ENCODE measurements at regions of chr3 and their contacts with region 1.

Region 1: GRCh38 chr3:51670823-51671733 is at the start of gene TEX264:
- DNase-seq: peak; percentile 89
- ATAC-seq: peak; percentile 68
- H3K4me3 Mint-ChIP-seq: peak within 1 kb of the TSS; percentile 85
- H3K27ac Mint-ChIP-seq: peak within 1 kb of the TSS; percentile 86
- H3K4me1 Mint-ChIP-seq: peaks cover 59% of the 10 kb centered on the region
- H3K27me3 Mint-ChIP-seq: no peaks in the 10 kb centered on the region
- CTCF ChIP-seq: no peak
- total RNA-seq, gene TEX264: 24.9 to 26.0 TPM

Region 2: GRCh38 chr3:51429138-51429537 is 241.9 kb before region 1 on chr3:
- CTCF ChIA-PET with region 1: no interaction called
- POLR2A ChIA-PET with region 1: no interaction called
- intact Hi-C with region 1: no loop called
- DNase-seq: no peak
- ATAC-seq: no peak
- H3K4me3 Mint-ChIP-seq: no peak overlapping the region
- H3K27ac Mint-ChIP-seq: no peak overlapping the region
- H3K4me1 Mint-ChIP-seq: peaks cover 2% of the 10 kb centered on the region
- H3K27me3 Mint-ChIP-seq: no peaks in the 10 kb centered on the region
- CTCF ChIP-seq: no peak

Region 3: GRCh38 chr3:51538459-51539290 is 132.4 kb before region 1 on chr3 and contains the start of gene RAD54L2:
- CTCF ChIA-PET with region 1: interaction called, 17 read pairs
- POLR2A ChIA-PET with region 1: interaction called, 3 read pairs
- intact Hi-C with region 1: no loop called
- DNase-seq: peak; percentile 75
- ATAC-seq: peak; percentile 87
- H3K4me3 Mint-ChIP-seq: peak within 1 kb of the TSS; percentile 83
- H3K27ac Mint-ChIP-seq: peak within 1 kb of the TSS; percentile 89
- H3K4me1 Mint-ChIP-seq: peaks cover 22% of the 10 kb centered on the region
- H3K27me3 Mint-ChIP-seq: no peaks in the 10 kb centered on the region
- CTCF ChIP-seq: peak; percentile 30
- total RNA-seq, gene RAD54L2: 24.1 to 24.6 TPM

Region 4: GRCh38 chr3:51605938-51606337 is 65.1 kb before region 1 on chr3:
- CTCF ChIA-PET with region 1: no interaction called
- POLR2A ChIA-PET with region 1: no interaction called
- intact Hi-C with region 1: no loop called
- DNase-seq: peak; percentile 35
- ATAC-seq: peak; percentile 55
- H3K4me3 Mint-ChIP-seq: no peak overlapping the region
- H3K27ac Mint-ChIP-seq: peak overlapping the region; percentile 35
- H3K4me1 Mint-ChIP-seq: peaks cover 14% of the 10 kb centered on the region
- H3K27me3 Mint-ChIP-seq: no peaks in the 10 kb centered on the region
- CTCF ChIP-seq: no peak

Region 5: GRCh38 chr3:51637941-51638471 is 33.1 kb before region 1 on chr3:
- CTCF ChIA-PET with region 1: interaction called, 46 read pairs
- POLR2A ChIA-PET with region 1: no interaction called
- intact Hi-C with region 1: no loop called
- DNase-seq: peak; percentile 66
- ATAC-seq: peak; percentile 89
- H3K4me3 Mint-ChIP-seq: no peak overlapping the region
- H3K27ac Mint-ChIP-seq: no peak overlapping the region
- H3K4me1 Mint-ChIP-seq: no peaks in the 10 kb centered on the region
- H3K27me3 Mint-ChIP-seq: no peaks in the 10 kb centered on the region
- CTCF ChIP-seq: peak; percentile 76

Region 6: DNA sequence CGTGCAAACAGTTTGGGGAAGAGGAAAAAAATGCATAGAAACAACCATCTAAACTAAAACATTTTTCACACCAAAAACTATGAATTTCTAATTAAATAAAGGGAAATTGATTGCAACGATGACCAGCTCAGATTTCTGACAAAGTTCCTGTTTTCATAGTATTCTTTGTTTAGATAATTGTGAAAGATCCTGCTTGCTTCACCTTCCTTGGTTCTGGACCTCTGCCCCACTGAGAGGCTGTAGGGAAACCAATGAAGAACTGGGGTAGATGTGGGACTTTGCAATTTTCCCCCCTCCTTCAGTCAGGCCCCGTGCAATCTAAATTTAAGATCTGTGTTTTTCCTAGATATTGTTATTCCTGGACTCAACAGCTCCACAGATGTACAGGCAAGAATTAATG is 13.8 kb before region 1 on chr3:
- CTCF ChIA-PET with region 1: interaction called, 33 read pairs
- POLR2A ChIA-PET with region 1: interaction called, 3 read pairs
- intact Hi-C with region 1: no loop called
- DNase-seq: no peak
- ATAC-seq: no peak
- H3K4me3 Mint-ChIP-seq: no peak overlapping the region
- H3K27ac Mint-ChIP-seq: no peak overlapping the region
- H3K4me1 Mint-ChIP-seq: no peaks in the 10 kb centered on the region
- H3K27me3 Mint-ChIP-seq: no peaks in the 10 kb centered on the region
- CTCF ChIP-seq: no peak

Measured in activated CD8-positive, alpha-beta T cell treated with anti-CD3 and anti-CD28 coated beads for 36 hours (primary cell).